ENCODE measurements at regions of chrX and their contacts with region 1.

Region 1: GRCh38 chrX:68732906-68733493 is 85.5 kb downstream of the STARD8 start:
- DNase-seq: peak; percentile 77
- H3K4me3 Mint-ChIP-seq: no peak overlapping the region
- H3K27ac Mint-ChIP-seq: no peak overlapping the region
- H3K4me1 Mint-ChIP-seq: peaks cover 2% of the 10 kb centered on the region
- H3K27me3 Mint-ChIP-seq: peaks cover 4% of the 10 kb centered on the region

Region 2: DNA sequence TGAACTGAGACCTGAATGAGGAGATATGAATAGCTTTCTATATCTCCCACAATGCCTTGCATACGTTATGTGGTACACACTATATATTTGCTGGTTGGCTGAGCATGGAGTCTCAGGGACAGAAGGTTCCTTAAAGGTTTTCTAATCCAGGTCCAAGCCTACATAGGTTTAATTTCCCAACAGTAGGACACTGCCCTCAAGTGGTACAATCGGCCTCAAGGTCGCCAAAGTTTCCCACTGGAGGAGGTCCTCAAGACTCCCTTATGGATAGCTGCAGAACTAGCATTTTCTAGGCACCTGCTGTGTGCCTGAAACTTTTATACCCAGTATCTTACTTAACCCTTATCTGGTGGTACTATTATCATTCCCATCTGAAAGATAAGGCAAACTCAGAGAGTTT is 74.8 kb after region 1 on chrX:
- CTCF ChIA-PET with region 1: interaction called, 52 read pairs
- POLR2A ChIA-PET with region 1: no interaction called
- intact Hi-C with region 1: loop called (anchors 1 kb)
- DNase-seq: peak; percentile 25
- H3K4me3 Mint-ChIP-seq: no peak overlapping the region
- H3K27ac Mint-ChIP-seq: no peak overlapping the region
- H3K4me1 Mint-ChIP-seq: no peaks in the 10 kb centered on the region
- H3K27me3 Mint-ChIP-seq: no peaks in the 10 kb centered on the region